ENCODE measurements at regions of chr12 and their contacts with region 1.

Region 1: GRCh38 chr12:120710031-120710804 is at the start of gene UNC119B:
- DNase-seq: peak; percentile 76
- ATAC-seq: peak; percentile 81
- H3K4me3 Mint-ChIP-seq: peak within 1 kb of the TSS; percentile 80
- H3K27ac Mint-ChIP-seq: peak within 1 kb of the TSS; percentile 76
- H3K4me1 Mint-ChIP-seq: peaks cover 26% of the 10 kb centered on the region
- H3K27me3 Mint-ChIP-seq: no peaks in the 10 kb centered on the region
- CTCF ChIP-seq: no peak
- total RNA-seq, gene UNC119B: 23.8 to 24.3 TPM

Region 2: DNA sequence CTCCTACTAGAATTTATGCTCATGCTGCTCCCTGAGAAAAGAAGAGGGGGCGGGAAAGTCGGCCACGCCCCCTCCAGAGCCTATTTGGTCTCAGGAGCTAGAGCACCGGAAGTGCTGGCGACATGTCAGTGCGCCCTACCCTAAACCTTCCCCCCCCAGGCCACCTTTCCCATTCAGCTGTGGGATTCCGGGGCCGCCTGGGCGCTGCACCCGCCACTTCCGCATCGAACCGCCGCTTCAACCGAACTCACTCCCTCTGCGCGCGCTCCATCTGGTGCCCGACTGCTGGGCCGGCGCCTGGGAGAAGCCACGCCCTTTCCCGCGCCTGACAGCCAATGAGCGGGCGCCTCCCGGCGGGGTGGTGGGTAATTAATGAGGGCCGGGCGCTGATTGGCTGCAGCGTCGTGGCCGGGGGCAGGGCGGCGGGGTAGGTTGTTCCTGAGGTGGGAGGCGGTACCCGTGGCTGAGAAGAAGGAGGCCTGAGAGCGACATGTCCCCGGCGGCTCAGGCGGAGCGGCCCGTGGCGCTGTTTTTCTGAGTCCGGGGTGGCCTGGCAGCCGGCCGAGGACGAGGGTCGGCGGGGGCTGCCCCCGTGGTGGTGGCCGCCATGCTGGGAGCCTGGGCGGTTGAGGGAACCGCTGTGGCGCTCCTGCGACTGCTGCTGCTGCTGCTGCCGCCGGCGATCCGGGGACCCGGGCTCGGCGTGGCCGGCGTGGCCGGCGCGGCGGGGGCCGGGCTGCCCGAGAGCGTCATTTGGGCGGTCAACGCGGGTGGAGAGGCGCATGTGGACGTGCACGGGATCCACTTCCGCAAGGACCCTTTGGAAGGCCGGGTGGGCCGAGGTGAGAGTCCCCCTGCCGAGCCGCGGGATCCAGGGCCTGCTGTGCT is 23.3 kb before region 1 on chr12 and contains the start of gene MLEC:
- CTCF ChIA-PET with region 1: no interaction called
- POLR2A ChIA-PET with region 1: interaction called, 10 read pairs
- intact Hi-C with region 1: no loop called
- DNase-seq: peak; percentile 99
- ATAC-seq: peak; percentile 87
- H3K4me3 Mint-ChIP-seq: peak within 1 kb of the TSS; percentile 92
- H3K27ac Mint-ChIP-seq: peak within 1 kb of the TSS; percentile 93
- H3K4me1 Mint-ChIP-seq: peaks cover 36% of the 10 kb centered on the region
- H3K27me3 Mint-ChIP-seq: no peaks in the 10 kb centered on the region
- CTCF ChIP-seq: no peak
- total RNA-seq, gene MLEC: 79.2 to 79.4 TPM

Region 3: GRCh38 chr12:120748242-120748641 is 38.0 kb after region 1 on chr12:
- CTCF ChIA-PET with region 1: no interaction called
- POLR2A ChIA-PET with region 1: no interaction called
- intact Hi-C with region 1: no loop called
- DNase-seq: no peak
- ATAC-seq: no peak
- H3K4me3 Mint-ChIP-seq: no peak overlapping the region
- H3K27ac Mint-ChIP-seq: no peak overlapping the region
- H3K4me1 Mint-ChIP-seq: no peaks in the 10 kb centered on the region
- H3K27me3 Mint-ChIP-seq: peaks cover 2% of the 10 kb centered on the region
- CTCF ChIP-seq: no peak

Measured in activated CD8-positive, alpha-beta T cell treated with anti-CD3 and anti-CD28 coated beads for 36 hours (primary cell).